Sigmoid colon (tissue), 7 donors: ENCODE measurements at regions of chr7 and their contacts with region 1.

Region 1: GRCh38 chr7:79176859-79177477 is 276.5 kb downstream of the MAGI2 start:
- DNase-seq: no peak
- H3K4me3 ChIP-seq: no peak overlapping the region
- H3K27ac ChIP-seq: no peak overlapping the region
- H3K4me1 ChIP-seq: peaks cover 0 to 4% (median 0%) of the 10 kb centered on the region in 4 donors
- H3K27me3 ChIP-seq: no peaks in the 10 kb centered on the region
- CTCF ChIP-seq: peak in 3 of 4 experiments; percentile 16 to 39 (median 22)
- EP300 ChIP-seq: no peak
- POLR2A ChIP-seq: no peak

Region 2: GRCh38 chr7:78020136-78020873 is 1156.7 kb before region 1 on chr7:
- intact Hi-C with region 1: loop called (anchors 2 kb)
- DNase-seq: peak; percentile 80
- H3K4me3 ChIP-seq: peak overlapping the region; percentile 41 to 61 (median 58)
- H3K27ac ChIP-seq: peak overlapping the region; percentile 96 to 97 (median 97)
- H3K4me1 ChIP-seq: peaks cover 0 to 30% (median 14%) of the 10 kb centered on the region in 4 donors
- H3K27me3 ChIP-seq: no peaks in the 10 kb centered on the region
- CTCF ChIP-seq: peak in 3 of 4 experiments; percentile 36 to 71 (median 43)
- EP300 ChIP-seq: no peak
- POLR2A ChIP-seq: no peak

Region 3: DNA sequence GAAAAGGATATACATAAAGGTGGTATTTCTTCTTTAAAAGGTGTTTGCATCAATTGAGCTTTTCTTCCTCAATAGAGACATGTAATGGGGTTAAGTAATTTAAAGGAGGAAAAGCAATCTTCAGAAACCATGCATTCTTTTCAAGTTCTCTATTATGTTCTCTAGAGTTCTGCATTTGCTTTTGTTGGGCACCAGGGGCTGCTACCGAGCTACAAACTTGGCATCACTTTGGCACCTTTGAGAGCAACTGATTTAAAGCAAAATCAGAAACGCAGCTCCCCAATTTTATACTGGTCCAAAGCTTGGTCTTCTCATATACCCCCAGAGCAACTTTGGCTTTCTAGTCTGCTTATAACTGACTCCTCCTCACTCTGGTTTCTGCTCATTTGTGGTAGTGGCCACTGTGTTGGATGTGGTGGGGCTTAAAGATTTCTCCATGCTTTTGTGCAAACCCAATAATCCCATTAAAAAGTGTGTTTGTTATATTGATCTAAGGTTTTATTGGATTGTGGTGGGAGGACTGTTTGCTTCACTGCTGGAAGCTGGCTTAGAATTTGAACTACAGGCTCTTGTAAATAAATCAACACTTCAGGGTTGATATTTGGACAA is 666.3 kb before region 1 on chr7:
- intact Hi-C with region 1: loop called (anchors 5 kb)
- DNase-seq: no peak
- H3K4me3 ChIP-seq: no peak overlapping the region
- H3K27ac ChIP-seq: no peak overlapping the region
- H3K4me1 ChIP-seq: no peaks in the 10 kb centered on the region
- H3K27me3 ChIP-seq: no peaks in the 10 kb centered on the region
- CTCF ChIP-seq: peak in 2 of 4 experiments; percentile 28 to 42
- EP300 ChIP-seq: no peak
- POLR2A ChIP-seq: no peak

Region 4: GRCh38 chr7:79149866-79150265 is 27.1 kb before region 1 on chr7:
- intact Hi-C with region 1: no loop called
- DNase-seq: no peak
- H3K4me3 ChIP-seq: no peak overlapping the region
- H3K27ac ChIP-seq: no peak overlapping the region
- H3K4me1 ChIP-seq: no peaks in the 10 kb centered on the region
- H3K27me3 ChIP-seq: no peaks in the 10 kb centered on the region
- CTCF ChIP-seq: no peak
- EP300 ChIP-seq: no peak
- POLR2A ChIP-seq: no peak

Region 5: DNA sequence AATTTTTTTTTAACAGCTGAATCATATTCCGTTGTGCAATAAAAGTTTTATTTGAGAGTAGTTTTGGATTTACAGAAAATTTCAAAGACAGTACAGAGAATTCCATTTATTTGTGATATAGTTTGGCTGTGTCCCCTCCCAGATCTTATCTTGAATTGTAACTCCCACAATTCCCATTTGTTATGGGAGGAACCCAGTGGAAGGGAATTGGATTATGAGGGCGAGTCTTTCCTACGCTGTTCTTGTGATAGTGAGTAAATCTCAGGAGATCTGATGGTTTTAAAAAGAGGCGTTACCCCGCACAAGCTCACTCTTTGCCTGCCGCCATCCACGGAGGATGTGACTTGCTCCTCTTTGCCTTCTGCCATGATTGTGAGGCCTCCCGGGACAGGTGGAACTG is 504.5 kb after region 1 on chr7:
- intact Hi-C with region 1: no loop called
- DNase-seq: no peak
- H3K4me3 ChIP-seq: no peak overlapping the region
- H3K27ac ChIP-seq: no peak overlapping the region
- H3K4me1 ChIP-seq: no peaks in the 10 kb centered on the region
- H3K27me3 ChIP-seq: no peaks in the 10 kb centered on the region
- CTCF ChIP-seq: no peak
- EP300 ChIP-seq: no peak
- POLR2A ChIP-seq: no peak

Region 6: GRCh38 chr7:79897166-79897565 is 720.2 kb after region 1 on chr7:
- intact Hi-C with region 1: no loop called
- DNase-seq: no peak
- H3K4me3 ChIP-seq: no peak overlapping the region
- H3K27ac ChIP-seq: no peak overlapping the region
- H3K4me1 ChIP-seq: no peaks in the 10 kb centered on the region
- H3K27me3 ChIP-seq: no peaks in the 10 kb centered on the region
- CTCF ChIP-seq: no peak
- EP300 ChIP-seq: no peak
- POLR2A ChIP-seq: no peak